ENCODE measurements at regions of chr12 and their contacts with region 1.

Region 1: GRCh38 chr12:55738123-55739024 is 4.5 kb upstream of the GDF11 start:
- DNase-seq: peak; percentile 64 to 93
- H3K4me3 ChIP-seq: peak overlapping the region; percentile 65 to 73
- H3K27ac ChIP-seq: peak overlapping the region; percentile 81 to 82
- H3K4me1 ChIP-seq: peaks cover 3 to 13% of the 10 kb centered on the region in 2 donors
- H3K27me3 ChIP-seq: no peaks in the 10 kb centered on the region
- CTCF ChIP-seq: peak; percentile 82 to 89 (median 86)

Region 2: DNA sequence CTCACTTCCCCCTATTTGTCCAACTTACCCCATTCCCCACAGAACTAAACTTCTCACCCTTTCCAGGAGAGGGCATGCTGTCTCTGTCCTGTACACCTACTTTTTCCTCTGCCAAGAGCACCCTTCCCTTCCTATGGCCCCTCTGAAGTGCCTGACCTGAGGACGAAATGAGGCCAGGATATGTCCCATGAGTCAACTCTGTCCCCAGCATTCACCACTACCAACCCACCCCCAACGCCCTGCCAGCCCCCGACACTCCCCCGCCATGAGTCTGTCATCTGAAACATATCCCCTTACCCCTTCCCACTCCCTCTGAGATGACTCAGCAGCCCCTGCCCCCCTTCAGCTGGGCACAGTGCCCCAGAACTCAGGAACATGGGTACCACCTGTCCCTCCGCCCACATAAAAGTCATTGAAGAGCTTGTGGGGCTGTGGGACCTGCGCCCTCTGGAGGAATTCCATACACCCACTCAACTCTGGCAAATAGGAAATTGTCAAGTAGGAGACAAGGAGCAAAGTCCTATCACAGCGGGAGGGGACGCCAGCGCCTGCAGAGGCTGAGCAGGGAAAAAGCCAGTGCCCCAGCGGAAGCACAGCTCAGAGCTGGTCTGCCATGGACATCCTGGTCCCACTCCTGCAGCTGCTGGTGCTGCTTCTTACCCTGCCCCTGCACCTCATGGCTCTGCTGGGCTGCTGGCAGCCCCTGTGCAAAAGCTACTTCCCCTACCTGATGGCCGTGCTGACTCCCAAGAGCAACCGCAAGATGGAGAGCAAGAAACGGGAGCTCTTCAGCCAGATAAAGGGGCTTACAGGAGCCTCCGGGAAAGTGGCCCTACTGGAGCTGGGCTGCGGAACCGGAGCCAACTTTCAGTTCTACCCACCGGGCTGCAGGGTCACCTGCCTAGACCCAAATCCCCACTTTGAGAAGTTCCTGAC is 57.0 kb before region 1 on chr12:
- intact Hi-C with region 1: loop called (anchors 1 kb)
- DNase-seq: peak; percentile 38 to 81
- H3K4me3 ChIP-seq: peak overlapping the region; percentile 4 to 34
- H3K27ac ChIP-seq: peak overlapping the region; percentile 4 to 15
- H3K4me1 ChIP-seq: peaks cover 5 to 7% of the 10 kb centered on the region in 2 donors
- H3K27me3 ChIP-seq: no peaks in the 10 kb centered on the region
- CTCF ChIP-seq: peak in 2 of 3 experiments; percentile 9 to 37

Region 3: GRCh38 chr12:55817346-55818139 is 79.2 kb after region 1 on chr12 and contains the starts of genes ORMDL2 and SARNP:
- intact Hi-C with region 1: loop called (anchors 5 kb)
- DNase-seq: peak; percentile 99
- H3K4me3 ChIP-seq: peak within 1 kb of the TSS; percentile 66 to 87
- H3K27ac ChIP-seq: peak within 1 kb of the TSS; percentile 86 to 89
- H3K4me1 ChIP-seq: peaks cover 0 to 17% of the 10 kb centered on the region in 2 donors
- H3K27me3 ChIP-seq: no peaks in the 10 kb centered on the region
- CTCF ChIP-seq: no peak
- total RNA-seq, gene ORMDL2: 13.8 TPM
- total RNA-seq, gene SARNP: 13.4 TPM

Region 4: DNA sequence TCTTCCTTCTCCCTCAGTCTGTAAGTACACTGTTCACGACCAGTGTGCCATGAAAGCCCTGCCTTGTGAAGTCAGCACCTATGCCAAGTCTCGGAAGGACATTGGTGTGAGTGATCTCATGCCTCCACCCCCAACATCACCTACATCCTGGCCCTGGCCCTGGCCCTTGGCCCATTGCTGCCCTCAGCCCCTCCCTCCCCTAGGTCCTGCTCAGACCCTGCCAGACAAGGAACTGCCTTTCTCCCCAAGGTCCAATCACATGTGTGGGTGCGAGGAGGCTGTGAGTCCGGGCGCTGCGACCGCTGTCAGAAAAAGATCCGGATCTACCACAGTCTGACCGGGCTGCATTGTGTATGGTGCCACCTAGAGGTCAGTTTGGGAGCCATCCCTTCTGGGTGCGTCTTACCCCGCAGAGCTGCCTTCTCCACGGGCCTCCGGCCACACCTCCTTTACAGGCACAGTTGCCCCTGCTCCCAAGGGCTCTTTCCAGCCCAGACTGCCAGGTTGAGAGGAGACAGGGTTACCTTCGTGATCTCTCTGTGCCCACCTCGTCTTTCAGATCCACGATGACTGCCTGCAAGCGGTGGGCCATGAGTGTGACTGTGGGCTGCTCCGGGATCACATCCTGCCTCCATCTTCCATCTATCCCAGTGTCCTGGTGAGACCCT is 201.8 kb after region 1 on chr12:
- intact Hi-C with region 1: loop called (anchors 1 kb)
- DNase-seq: peak; percentile 36 to 93
- H3K4me3 ChIP-seq: peak overlapping the region in 1 of 2 donors; percentile 42
- H3K27ac ChIP-seq: peak overlapping the region; percentile 53 to 71
- H3K4me1 ChIP-seq: peaks cover 0 to 7% of the 10 kb centered on the region in 2 donors
- H3K27me3 ChIP-seq: no peaks in the 10 kb centered on the region
- CTCF ChIP-seq: peak; percentile 83 to 90 (median 87)

Measured in ascending aorta (tissue), 2 donors.